Activated B cell treated with CpG ODN at 0.5 μM for 24 hours (primary cell): ENCODE measurements at regions of chr10 and their contacts with region 1.

Region 1: GRCh38 chr10:62804356-62805230 is at the start of gene ADO:
- DNase-seq: peak; percentile 77
- ATAC-seq: peak; percentile 87
- H3K4me3 Mint-ChIP-seq: peak within 1 kb of the TSS; percentile 95
- H3K27ac Mint-ChIP-seq: peak within 1 kb of the TSS; percentile 99
- H3K4me1 Mint-ChIP-seq: peaks cover 41% of the 10 kb centered on the region
- H3K27me3 Mint-ChIP-seq: no peaks in the 10 kb centered on the region
- CTCF ChIP-seq: no peak
- total RNA-seq, gene ADO: 21.6 and 21.7 TPM in 2 replicates

Region 2: DNA sequence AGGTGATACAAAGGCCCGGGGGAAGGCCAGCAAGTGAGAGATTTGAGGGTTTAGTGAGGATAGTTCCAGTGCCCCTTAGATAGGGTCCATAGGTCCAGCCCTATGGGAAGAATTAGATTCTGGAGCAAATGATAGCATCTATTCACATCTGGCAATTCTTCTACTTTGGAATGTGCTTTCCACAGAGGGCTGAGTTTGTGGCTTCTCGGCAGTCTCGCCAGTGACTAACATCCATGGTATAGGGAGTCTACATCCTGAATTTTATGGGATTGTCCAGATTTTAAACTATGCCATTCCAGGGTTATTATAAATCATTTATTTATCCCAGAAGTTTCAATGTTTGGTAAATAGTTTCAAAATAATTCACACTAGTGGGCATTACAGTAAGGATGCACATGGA is 207.4 kb before region 1 on chr10:
- CTCF ChIA-PET with region 1: no interaction called
- POLR2A ChIA-PET with region 1: no interaction called
- intact Hi-C with region 1: no loop called
- DNase-seq: no peak
- ATAC-seq: no peak
- H3K4me3 Mint-ChIP-seq: no peak overlapping the region
- H3K27ac Mint-ChIP-seq: no peak overlapping the region
- H3K4me1 Mint-ChIP-seq: peaks cover 14% of the 10 kb centered on the region
- H3K27me3 Mint-ChIP-seq: no peaks in the 10 kb centered on the region
- CTCF ChIP-seq: no peak

Region 3: DNA sequence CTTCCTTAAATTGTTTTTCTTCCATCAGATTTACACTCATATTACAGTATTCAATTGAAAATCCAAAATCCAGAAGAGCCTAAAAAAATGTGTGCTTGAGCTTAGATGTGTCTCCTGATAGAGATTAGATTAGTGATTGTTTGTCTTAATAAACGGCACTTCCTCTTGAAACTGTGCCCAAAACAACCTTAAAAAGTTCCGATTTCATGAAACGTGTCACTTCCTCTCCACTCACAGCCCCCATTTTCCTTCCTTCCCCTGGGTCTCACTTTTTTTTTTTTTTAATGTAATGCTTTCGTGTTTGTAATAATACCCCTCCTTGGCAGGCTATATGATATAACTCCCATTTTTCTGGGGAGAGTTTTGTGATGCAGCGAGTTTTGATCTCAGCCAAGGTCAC is 114.9 kb before region 1 on chr10:
- CTCF ChIA-PET with region 1: no interaction called
- POLR2A ChIA-PET with region 1: interaction called, 3 read pairs
- intact Hi-C with region 1: loop called (anchors 2 kb)
- DNase-seq: no peak
- ATAC-seq: peak; percentile 76
- H3K4me3 Mint-ChIP-seq: peak overlapping the region; percentile 70
- H3K27ac Mint-ChIP-seq: peak overlapping the region; percentile 75
- H3K4me1 Mint-ChIP-seq: peaks cover 43% of the 10 kb centered on the region
- H3K27me3 Mint-ChIP-seq: no peaks in the 10 kb centered on the region
- CTCF ChIP-seq: no peak